Panc1 (cell line): ENCODE measurements at regions of chrX and their contacts with region 1.

Region 1: DNA sequence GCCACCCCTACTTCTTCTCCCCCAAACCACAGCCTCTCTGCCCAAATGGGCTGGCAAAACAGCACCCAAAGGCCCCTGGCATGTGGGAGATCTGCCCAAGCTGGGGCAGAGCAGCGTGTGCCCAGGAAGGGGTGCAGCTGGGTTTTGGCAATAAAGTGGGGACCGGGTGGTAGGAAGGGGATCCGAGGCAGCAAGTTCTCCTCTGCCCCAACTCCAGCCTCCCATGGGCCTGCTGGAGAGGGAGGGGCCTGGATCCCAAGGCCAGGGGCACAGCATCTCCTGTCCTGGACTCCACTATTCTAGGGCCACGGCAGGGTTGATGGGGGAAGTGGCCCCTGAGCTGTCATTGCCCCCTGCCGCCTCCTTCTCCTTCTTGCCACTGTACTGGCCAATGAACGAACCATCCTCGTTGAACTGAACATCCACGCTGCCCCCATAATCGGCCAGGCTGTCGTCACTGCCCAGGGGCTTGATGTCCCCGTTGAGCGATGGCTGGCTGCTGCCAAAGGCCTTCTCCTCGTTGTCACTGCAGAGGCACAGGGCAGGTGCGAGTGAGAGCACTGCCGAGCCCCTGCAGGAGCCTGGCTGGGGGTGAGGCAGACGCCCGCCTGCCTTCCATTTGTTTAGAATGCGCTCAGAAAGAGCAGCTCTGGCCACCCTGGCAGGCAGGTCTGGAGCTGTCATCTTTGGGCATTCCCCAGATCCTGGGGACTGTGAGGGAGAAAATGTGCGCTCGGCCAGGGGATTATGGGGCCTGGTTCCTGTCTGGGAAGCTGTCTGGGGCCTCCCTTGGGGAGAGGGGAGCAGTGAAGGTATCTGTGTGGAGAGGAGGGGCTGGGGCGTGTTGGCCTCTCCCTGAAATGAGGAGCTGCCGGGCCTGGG is 23.4 kb downstream of the L1CAM start:
- DNase-seq: no peak
- ATAC-seq: no peak
- H3K4me3 ChIP-seq: no peak overlapping the region
- H3K27ac ChIP-seq: no peak overlapping the region
- H3K4me1 ChIP-seq: no peaks in the 10 kb centered on the region
- H3K27me3 ChIP-seq: no peaks in the 10 kb centered on the region; the same call in 1 of the 2 replicates
- CTCF ChIP-seq: no peak

Region 2: DNA sequence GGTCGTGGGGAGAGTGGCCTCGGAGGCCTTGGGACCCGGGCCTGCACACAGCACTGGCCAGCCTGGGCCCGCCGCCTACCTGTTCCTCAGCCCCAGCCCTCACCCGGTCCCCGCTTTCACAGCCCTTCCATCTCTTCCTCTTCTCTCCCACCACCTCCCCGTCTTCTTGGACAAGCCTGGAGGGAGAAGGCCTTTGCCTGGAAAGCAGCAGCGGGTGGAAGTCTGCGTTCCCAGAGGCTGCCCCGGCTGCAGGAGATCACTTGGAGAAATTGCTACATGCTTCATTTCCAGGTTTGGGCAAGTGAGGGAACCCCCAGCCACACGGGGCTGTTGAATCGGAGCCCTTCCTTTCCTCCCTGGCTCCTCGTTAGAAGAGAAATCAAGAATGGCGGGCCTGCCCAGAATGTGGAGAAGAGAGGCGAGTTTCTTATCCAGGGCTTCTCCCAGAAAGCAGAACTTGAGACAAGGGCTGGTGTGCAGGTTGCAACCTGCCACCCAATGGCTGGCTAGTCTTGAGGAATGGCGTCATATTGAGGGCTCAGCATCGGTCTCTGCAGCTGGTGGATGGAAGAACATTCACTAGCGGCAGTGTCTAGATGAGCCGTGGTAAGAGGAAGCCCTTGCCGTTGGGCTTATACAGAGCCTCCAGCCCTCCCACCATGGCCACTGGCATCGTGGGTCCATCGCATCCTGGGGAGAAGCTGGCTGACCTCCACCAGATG is 31.0 kb before region 1 on chrX:
- CTCF ChIA-PET with region 1: no interaction called
- POLR2A ChIA-PET with region 1: interaction called, 13 read pairs
- in situ Hi-C with region 1: no loop called
- intact Hi-C with region 1: no loop called
- DNase-seq: no peak
- ATAC-seq: no peak
- H3K4me3 ChIP-seq: no peak overlapping the region
- H3K27ac ChIP-seq: no peak overlapping the region
- H3K4me1 ChIP-seq: peaks cover 10% of the 10 kb centered on the region; the same call in 1 of the 2 replicates
- H3K27me3 ChIP-seq: no peaks in the 10 kb centered on the region
- CTCF ChIP-seq: no peak